Ovary (tissue), 10 donors: ENCODE measurements at regions of chr17 and their contacts with region 1.

Region 1: DNA sequence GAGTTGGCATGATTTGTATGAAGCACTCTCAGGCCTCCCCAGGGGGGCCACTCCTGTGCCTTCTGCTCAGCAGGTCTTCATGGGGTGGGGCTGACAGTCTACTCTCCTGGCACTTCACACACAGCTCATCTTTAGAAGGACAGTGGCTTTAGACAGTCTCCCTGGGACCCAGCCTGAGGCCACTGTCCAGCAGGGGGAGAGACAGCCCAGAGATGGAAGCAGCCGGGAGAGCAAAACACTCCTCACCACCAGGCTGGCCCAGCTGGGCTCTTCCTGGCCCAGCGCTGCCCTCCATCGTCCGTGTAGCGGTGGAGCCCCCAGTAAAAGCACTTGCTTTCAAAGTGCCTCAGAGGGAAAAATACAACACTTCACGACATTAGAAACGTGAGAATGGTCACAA is 62.0 kb upstream of the CRHR1 start:
- DNase-seq: no peak
- H3K4me3 ChIP-seq: no peak overlapping the region
- H3K27ac ChIP-seq: no peak overlapping the region
- H3K4me1 ChIP-seq: no peaks in the 10 kb centered on the region
- H3K27me3 ChIP-seq: no peaks in the 10 kb centered on the region
- CTCF ChIP-seq: no peak
- EP300 ChIP-seq: no peak
- POLR2A ChIP-seq: no peak

Region 2: DNA sequence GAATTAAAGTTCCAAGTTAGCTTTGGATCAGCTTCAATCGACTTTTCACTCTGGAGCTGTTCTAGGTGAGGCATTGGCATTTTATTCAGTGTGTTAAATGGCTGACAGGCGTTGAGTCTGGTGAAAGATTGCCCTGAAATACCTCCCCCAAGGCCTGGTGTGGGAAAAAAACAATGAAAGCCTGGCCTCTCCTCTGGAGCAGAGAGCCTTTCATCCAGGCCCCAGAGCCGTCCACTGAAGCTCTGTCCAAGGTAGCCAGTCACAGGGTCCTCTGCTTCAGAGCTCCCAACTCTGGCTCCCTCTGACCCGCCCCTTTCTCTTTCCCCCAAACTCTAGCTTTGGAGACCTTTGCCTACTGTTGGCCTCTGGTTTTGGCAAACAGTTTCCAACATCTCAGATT is 61.7 kb before region 1 on chr17:
- intact Hi-C with region 1: loop called in 1 of 4 experiments (anchors 2 kb)
- DNase-seq: no peak
- H3K4me3 ChIP-seq: no peak overlapping the region
- H3K27ac ChIP-seq: no peak overlapping the region
- H3K4me1 ChIP-seq: no peaks in the 10 kb centered on the region
- H3K27me3 ChIP-seq: no peaks in the 10 kb centered on the region
- CTCF ChIP-seq: no peak
- EP300 ChIP-seq: no peak
- POLR2A ChIP-seq: no peak

Region 3: DNA sequence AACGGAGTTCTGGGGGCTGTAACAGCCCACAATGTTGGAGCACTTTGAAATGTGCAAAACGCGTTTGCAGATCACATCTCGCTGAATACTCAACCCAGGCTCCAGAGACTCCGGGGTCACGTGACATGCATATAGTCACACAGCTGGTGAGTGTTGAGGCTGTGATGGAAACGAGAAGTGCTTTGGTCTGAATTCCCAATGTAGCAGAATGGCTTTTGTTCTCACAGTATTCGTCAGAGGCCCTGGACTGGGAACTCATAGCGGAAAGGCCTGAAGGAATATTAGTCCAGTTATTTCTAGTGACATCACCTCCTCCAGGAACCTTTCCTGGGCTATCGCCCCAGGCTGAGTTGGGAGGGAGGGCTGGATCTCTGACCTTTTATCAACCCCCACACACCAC is 33.8 kb before region 1 on chr17:
- intact Hi-C with region 1: no loop called
- DNase-seq: no peak
- H3K4me3 ChIP-seq: no peak overlapping the region
- H3K27ac ChIP-seq: no peak overlapping the region
- H3K4me1 ChIP-seq: no peaks in the 10 kb centered on the region
- H3K27me3 ChIP-seq: no peaks in the 10 kb centered on the region
- CTCF ChIP-seq: no peak
- EP300 ChIP-seq: no peak
- POLR2A ChIP-seq: no peak